Left cardiac atrium (tissue), 4 donors: ENCODE measurements at regions of chr9 and their contacts with region 1.

Region 1: DNA sequence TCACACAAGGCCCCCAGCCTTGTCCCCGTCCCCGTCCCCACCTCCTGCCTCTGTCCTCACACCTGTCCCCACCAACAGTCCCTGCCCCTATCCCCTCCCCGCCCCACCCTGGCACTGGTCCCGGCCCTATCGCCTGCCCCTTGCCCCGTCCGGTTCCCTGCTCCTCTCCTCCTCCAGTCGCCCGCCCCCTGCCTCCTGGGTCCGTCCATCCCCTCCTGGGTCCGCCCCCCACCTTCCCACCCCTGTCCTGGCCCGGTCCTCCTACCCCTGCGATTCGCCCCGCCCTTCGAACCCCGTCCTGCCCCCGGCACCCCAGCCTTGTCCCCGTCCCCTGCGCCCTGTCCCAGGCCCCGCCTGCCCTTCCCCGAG is 389 bp downstream of the EDF1 start:
- DNase-seq: peak; percentile 40
- ATAC-seq: peak; percentile 31 to 35

Region 2: DNA sequence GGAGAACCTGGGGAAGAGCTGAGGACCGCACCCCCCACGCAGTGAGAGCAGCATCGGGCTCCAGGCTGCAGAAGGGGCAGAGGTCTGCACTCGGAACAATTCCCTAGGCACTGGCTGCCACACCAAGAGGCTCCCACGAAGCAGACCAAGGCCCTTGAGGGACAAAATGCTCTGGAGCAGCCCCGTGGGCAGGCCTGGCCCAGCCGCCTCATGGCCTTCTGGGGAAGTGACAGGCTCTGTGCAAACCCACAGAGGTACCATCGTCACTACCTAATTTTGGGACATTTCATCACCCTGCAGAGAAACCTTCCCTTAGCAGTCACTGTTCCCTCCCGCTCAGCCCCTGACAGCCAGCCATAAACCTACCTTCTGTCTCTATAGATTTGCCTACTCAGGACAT is 62.9 kb after region 1 on chr9:
- intact Hi-C with region 1: loop called in 1 of 2 experiments (anchors 10 kb)
- DNase-seq: no peak
- ATAC-seq: peak; percentile 70 to 82

Region 3: DNA sequence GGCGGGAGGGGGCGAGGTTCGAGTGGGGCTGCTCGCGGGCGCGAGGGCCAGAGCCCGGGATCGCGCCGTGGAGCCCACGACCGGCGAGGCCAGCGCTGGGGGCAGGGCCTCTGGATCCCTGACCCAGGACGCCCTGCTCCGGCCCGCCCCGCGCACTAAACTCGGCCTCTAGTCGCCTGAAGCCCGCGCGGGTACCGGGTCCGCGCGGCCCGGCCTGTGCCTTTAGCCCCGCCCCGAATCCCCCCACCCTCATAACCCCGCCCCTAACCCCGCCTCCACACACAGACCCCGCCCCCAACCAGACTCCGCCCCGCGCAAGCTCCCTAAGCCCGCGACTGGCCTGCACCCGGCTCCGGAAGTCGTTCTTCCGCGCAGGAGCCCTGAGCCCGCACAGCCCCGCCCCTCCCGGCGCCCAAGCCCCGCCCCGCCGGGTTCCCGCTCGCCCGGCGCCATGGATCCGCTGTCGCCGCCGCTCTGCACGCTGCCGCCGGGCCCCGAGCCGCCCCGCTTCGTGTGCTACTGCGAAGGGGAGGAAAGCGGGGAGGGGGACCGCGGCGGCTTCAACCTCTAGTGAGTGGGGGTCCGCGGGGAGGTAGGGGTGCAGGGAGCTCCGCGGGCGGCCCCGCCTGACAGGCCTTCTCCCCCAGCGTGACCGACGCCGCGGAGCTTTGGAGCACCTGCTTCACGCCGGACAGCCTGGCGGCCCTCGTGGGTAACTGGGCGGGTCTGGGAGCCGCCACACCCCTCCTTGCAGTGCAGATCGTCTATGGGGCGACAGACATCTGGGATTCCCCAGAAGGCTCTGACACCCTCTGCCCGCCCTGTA is 126.5 kb after region 1 on chr9 and contains the start of gene PAXX:
- intact Hi-C with region 1: no loop called
- DNase-seq: peak; percentile 95
- ATAC-seq: peak; percentile 93 to 97
- total RNA-seq, gene PAXX: 25.4 to 30.2 TPM

Region 4: DNA sequence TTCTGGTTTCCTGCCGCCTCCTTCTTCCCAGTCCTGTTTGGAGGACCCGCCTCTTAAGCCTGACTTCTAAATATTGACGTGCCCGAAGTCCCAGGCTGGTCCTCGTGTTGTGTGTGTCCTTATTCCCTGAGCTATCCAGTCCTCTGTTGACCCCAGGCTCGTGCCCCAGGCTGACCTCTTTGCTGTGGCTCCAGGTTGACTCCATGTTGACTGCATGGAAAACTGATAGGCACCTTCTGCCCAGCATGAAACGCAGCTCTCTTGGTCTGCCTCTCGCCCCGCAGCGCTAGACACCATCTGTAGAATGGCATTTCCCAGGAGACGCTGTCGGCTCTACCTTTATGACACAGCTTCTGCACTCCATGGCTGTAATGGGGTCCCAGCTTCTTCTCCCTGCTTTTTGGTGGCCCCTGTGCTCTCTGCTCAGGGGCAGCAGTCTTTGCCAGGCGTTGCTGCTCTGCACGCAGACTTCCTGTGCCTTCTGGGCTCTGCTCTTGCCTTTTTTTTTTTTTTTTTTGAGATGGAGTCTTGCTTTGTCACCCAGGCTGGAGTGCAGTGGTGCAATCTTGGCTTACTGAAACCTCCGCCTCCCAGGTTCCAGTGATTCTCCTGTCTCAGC is 781.5 kb after region 1 on chr9:
- intact Hi-C with region 1: no loop called
- DNase-seq: no peak
- ATAC-seq: no peak